RWPE1 (cell line): ENCODE measurements at regions of chr11 and their contacts with region 1.

Region 1: DNA sequence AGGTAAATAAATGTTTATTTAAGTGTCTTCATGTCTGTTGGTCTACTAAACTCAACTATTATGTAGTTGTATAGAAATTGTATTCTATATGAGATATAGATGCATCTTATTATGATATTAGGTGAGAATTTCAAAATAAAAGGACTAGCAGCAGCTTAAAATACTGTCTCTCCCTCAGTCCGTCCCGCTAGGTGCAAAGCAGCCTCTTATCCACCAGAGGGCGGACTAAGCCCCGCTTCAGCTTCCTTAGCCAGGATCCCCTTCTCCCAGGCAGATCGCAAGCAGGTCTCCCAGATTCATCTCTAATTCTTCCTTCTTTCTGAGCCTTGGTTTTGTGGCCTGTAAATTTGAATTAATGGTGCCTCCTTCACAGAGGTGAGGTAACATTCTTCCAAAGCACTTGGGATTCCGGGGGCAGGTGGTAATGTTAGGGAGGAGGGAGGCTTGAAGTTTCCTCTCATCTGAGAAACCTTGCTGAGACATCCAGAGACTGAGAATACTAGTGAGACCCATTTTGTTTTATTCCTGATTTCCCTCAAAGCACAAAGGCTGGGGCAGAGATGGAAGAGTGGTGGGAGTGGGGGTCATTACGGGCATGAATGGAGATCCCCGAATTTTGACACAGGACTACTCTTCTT is 13.5 kb upstream of the INSC start:
- DNase-seq: peak; percentile 76
- H3K27ac ChIP-seq: no peak overlapping the region
- CTCF ChIP-seq: peak; percentile 89

Region 2: GRCh38 chr11:15208378-15209222 is 107.4 kb after region 1 on chr11:
- CTCF ChIA-PET with region 1: interaction called, 26 read pairs
- POLR2A ChIA-PET with region 1: no interaction called
- DNase-seq: peak; percentile 77
- H3K27ac ChIP-seq: no peak overlapping the region
- CTCF ChIP-seq: peak; percentile 59